ENCODE measurements at regions of chr7 and their contacts with region 1.

Region 1: DNA sequence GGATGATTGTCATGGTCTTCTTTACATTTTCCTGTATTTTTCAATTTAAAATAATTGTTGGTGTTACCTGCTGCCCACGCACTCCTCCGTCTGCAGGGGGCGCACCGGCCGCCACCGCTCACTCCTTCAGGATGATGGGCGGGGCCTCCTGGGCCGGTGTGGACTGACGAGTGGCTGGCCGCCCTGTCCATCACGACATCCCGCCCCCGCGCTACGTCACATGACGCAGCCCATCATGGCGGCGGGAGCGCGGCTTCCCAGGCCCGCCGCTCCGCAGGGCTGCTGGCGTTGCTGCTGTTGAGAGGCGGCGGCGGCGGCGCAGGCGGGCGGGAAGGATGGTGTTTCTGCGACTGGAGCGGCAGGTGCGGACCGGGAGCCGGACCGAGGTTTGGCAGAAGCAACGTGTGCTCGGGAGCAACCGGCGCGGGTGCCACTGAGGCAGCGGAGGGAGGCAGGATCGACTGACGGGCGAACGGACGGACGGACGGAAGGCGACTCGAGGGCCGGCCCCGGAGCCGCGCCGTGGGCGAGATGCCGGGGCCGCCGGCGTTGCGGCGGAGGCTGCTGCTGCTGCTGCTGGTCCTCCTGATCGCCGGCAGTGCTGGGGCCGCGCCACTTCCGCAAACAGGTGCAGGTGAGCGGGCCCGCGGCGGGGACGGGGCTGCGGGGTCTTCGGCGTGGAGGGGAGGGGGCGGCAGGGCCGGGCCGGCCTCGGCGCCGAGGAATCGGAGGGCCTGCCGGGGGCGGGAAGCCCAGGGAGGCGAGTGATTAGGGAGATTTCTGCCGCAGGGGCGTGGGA is at the start of gene LMTK2:
- DNase-seq: peak; percentile 93 to 99 (median 96)
- H3K4me3 ChIP-seq: peak within 1 kb of the TSS; percentile 60 to 84
- H3K4me3 Mint-ChIP-seq: peak within 1 kb of the TSS; percentile 86 to 99 (median 94)
- H3K27ac ChIP-seq: peak within 1 kb of the TSS; percentile 80
- H3K27ac Mint-ChIP-seq: peak within 1 kb of the TSS; percentile 89 to 95 (median 93)
- H3K4me1 ChIP-seq: peaks cover 44% of the 10 kb centered on the region
- H3K4me1 Mint-ChIP-seq: peaks cover 23 to 50% (median 40%) of the 10 kb centered on the region in 4 donors
- H3K27me3 ChIP-seq: no peaks in the 10 kb centered on the region
- H3K27me3 Mint-ChIP-seq: peaks cover 1 to 9% of the 10 kb centered on the region in 2 donors
- total RNA-seq, gene LMTK2: 23.1 to 26.6 TPM

Region 2: DNA sequence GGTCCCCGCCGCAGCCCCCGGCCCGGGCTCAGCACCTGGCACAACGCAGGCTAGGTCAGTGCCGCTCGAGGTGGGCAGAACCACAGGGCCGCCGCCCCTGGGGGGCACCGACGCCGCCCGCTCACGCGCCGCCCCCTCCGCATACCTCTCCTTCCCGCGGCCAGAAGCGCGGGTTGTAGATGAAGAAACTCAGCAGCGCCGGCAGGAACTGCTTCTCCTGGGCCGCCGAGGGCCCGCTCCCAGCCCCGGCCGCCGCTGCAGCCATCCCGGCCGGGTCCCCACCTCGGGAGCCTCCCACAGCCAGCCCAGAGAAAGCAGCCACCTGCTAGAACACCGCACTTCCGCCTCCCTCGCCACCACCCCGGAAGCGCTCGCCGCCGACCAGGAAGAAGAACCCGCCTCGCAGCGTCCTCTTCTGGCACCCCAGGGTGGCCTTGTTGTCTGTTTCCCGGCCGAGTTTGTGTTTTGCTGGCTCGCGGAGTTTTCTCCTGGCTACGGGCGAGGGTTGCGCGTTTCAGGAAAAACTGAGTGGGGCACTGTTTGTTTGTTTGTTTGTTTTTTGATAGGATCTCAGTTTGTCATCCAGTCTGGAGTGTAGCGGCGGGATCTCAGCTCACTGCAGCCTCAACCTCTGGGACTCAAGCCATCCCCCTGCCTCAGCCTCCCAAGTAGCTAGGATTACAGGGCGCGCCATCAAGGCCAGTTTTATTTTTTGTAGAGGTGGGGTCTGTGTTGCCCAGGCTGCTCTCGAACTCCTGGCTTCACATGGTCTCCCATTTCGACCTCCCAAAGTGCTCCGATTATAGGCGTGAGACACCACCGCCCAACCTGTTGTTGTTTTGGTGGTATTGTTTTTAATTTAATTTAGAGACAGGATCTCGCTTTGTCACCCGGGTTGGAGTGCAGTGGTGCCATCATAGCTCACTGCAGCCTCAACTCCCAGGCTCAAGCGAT is 134.6 kb before region 1 on chr7:
- CTCF ChIA-PET with region 1: interaction called, 3 read pairs
- POLR2A ChIA-PET with region 1: no interaction called
- intact Hi-C with region 1: loop called (anchors 2 kb)
- DNase-seq: peak; percentile 81 to 85 (median 83)
- H3K4me3 ChIP-seq: peak overlapping the region; percentile 91 to 93
- H3K4me3 Mint-ChIP-seq: peak overlapping the region; percentile 93 to 98 (median 96)
- H3K27ac ChIP-seq: peak overlapping the region; percentile 65
- H3K27ac Mint-ChIP-seq: peak overlapping the region; percentile 86 to 96 (median 95)
- H3K4me1 ChIP-seq: peaks cover 15% of the 10 kb centered on the region
- H3K4me1 Mint-ChIP-seq: peaks cover 10 to 35% (median 19%) of the 10 kb centered on the region in 4 donors
- H3K27me3 ChIP-seq: no peaks in the 10 kb centered on the region
- H3K27me3 Mint-ChIP-seq: no peaks in the 10 kb centered on the region

Region 3: GRCh38 chr7:98133181-98133580 is 26.3 kb after region 1 on chr7:
- CTCF ChIA-PET with region 1: interaction called, 11 read pairs
- POLR2A ChIA-PET with region 1: interaction called, 4 read pairs
- intact Hi-C with region 1: no loop called
- DNase-seq: peak; percentile 33 to 54 (median 45)
- H3K4me3 ChIP-seq: peak overlapping the region in 1 of 2 donors; percentile 27
- H3K4me3 Mint-ChIP-seq: peak overlapping the region in 7 of 8 donors; percentile 42 to 82 (median 67)
- H3K27ac ChIP-seq: no peak overlapping the region
- H3K27ac Mint-ChIP-seq: peak overlapping the region in 2 of 7 donors; percentile 5 to 45
- H3K4me1 ChIP-seq: peaks cover 43% of the 10 kb centered on the region
- H3K4me1 Mint-ChIP-seq: peaks cover 44 to 62% (median 51%) of the 10 kb centered on the region in 4 donors
- H3K27me3 ChIP-seq: no peaks in the 10 kb centered on the region
- H3K27me3 Mint-ChIP-seq: peaks cover 0 to 1% of the 10 kb centered on the region in 2 donors

Region 4: GRCh38 chr7:98251841-98252639 is 145.2 kb after region 1 on chr7 and contains the start of gene TECPR1:
- CTCF ChIA-PET with region 1: interaction called, 4 read pairs
- POLR2A ChIA-PET with region 1: interaction called, 3 read pairs
- intact Hi-C with region 1: loop called (anchors 2 kb)
- DNase-seq: peak; percentile 85 to 91 (median 89)
- H3K4me3 ChIP-seq: peak within 1 kb of the TSS; percentile 83 to 99
- H3K4me3 Mint-ChIP-seq: peak within 1 kb of the TSS; percentile 92 to 97 (median 94)
- H3K27ac ChIP-seq: peak within 1 kb of the TSS; percentile 82
- H3K27ac Mint-ChIP-seq: peak within 1 kb of the TSS; percentile 98 to 100 (median 99)
- H3K4me1 ChIP-seq: peaks cover 71% of the 10 kb centered on the region
- H3K4me1 Mint-ChIP-seq: peaks cover 28 to 80% (median 56%) of the 10 kb centered on the region in 4 donors
- H3K27me3 ChIP-seq: no peaks in the 10 kb centered on the region
- H3K27me3 Mint-ChIP-seq: no peaks in the 10 kb centered on the region
- total RNA-seq, gene TECPR1: 140 to 147 TPM

Region 5: DNA sequence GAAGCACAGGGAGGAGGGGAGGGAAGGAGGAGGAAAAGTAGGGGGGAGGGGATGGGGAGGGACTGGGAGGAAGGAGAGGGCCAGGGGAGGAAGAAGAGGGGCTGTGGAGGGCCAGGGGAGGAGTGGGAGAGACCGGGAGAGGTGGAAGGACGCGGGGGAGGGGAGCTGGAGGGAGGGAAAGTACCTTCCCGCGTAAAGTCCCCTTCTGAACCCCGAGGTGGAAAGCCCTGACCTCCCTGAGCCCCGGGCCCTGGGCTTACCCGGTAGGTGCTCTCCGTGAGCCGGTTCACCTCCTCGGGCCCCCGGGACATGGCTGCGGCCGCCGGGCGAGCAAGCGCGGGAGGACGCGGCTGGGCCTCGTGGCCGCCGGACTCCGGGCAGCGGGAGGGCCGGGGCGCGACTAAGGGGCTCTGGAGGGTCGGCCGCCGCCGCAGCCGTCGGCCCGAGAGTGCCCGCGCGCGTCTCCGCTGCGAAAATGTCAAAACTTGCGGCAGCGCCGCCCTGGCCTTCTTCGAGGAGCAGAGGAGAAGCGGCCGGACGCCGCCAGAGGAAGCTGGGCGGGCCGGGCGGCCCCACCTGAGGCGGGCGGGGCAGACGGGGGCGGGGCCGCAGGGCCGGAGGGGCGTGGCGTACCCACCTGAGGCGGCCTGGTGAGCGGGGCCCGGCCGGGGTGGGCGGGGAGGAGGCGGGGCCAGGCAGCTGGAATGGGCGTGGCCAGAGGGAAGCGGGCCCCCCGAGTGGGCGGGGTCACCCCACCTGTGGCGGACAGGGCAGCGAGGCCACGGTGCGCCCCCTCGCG is 293.9 kb after region 1 on chr7 and contains the start of gene BAIAP2L1:
- CTCF ChIA-PET with region 1: interaction called, 3 read pairs
- POLR2A ChIA-PET with region 1: no interaction called
- intact Hi-C with region 1: loop called (anchors 2 kb)
- DNase-seq: peak; percentile 57 to 74 (median 73)
- H3K4me3 ChIP-seq: no peak within 1 kb of the TSS
- H3K4me3 Mint-ChIP-seq: peak within 1 kb of the TSS; percentile 58 to 76 (median 66)
- H3K27ac ChIP-seq: no peak within 1 kb of the TSS
- H3K27ac Mint-ChIP-seq: peak within 1 kb of the TSS in 3 of 7 donors; percentile 12 to 48 (median 19)
- H3K4me1 ChIP-seq: peaks cover 12% of the 10 kb centered on the region
- H3K4me1 Mint-ChIP-seq: peaks cover 0 to 9% (median 4%) of the 10 kb centered on the region in 4 donors
- H3K27me3 ChIP-seq: peaks cover 4% of the 10 kb centered on the region
- H3K27me3 Mint-ChIP-seq: peaks cover 7 to 11% of the 10 kb centered on the region in 2 donors
- total RNA-seq, gene BAIAP2L1: 0.36 to 0.38 TPM

Region 6: DNA sequence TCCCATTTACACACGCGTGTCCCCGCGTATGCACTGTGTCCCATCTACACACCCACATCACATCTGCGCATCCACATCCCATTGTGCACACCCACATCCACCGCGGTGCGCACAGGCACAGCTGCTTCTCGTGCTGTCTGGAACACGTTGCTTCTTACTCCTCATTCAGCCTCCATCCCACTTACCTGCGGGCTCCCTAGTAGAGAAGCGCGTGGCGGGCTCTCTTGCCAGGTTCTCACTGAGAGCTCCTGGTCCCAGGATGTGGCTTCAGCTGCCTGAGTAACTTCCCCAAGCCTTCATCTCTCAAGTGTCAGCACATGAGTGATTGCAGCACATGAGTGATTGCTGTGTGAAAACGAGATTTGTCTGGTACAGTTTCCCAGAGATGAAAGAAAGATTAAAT is 889.3 kb after region 1 on chr7:
- CTCF ChIA-PET with region 1: no interaction called
- POLR2A ChIA-PET with region 1: no interaction called
- intact Hi-C with region 1: no loop called
- DNase-seq: no peak
- H3K4me3 ChIP-seq: no peak overlapping the region
- H3K4me3 Mint-ChIP-seq: no peak overlapping the region
- H3K27ac ChIP-seq: no peak overlapping the region
- H3K27ac Mint-ChIP-seq: no peak overlapping the region
- H3K4me1 ChIP-seq: no peaks in the 10 kb centered on the region
- H3K4me1 Mint-ChIP-seq: peaks cover 0 to 4% (median under 1%) of the 10 kb centered on the region in 4 donors
- H3K27me3 ChIP-seq: no peaks in the 10 kb centered on the region
- H3K27me3 Mint-ChIP-seq: no peaks in the 10 kb centered on the region